Colonic mucosa (tissue), 4 donors: ENCODE measurements at regions of chr17 and their contacts with region 1.

Region 1: DNA sequence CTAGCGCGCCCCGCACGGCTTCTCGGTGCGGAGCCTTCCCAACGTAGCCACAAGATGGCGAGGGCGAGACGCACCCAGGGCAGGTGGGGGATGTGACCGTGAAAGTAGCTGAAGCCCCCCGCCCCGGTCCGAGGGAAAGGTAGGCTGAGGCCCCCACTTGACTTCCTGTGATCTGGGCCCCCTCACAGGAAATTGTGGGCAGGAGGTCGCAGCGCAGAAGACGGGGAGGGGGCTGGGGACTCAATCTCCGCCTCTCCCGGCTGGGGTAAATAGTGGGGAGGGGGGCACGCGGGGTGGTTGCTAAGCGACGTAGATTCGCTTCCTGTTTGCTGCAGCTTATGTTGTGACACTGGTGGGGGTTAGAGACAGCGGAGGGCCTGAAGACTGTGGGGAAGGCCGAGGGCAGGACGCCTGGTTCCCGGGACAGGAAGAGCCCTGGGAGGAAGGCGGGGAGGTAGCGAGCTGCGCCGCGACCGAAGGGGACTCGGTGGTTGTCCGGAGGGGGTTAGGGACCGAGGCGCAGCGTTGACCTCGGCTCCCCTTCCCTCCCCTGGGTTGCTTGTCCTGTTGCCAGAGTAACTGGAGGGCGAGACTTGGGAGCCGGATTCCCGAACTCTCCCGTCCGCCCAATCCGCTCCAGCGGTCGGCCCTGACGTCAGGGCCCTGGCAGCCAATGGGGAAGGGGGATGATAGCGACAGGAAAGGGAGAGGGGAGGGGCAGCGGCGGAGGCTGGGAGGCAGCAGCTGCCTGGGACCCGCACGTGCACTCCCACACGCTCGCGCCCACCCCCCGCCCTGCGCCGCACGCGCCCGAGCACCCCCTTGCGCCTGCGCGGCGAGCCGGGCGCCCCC is 1.2 kb downstream of the KDM6B start:
- DNase-seq: peak; percentile 98
- H3K4me3 ChIP-seq: peak overlapping the region; percentile 77
- H3K27ac ChIP-seq: peak overlapping the region; percentile 100
- H3K4me1 ChIP-seq: peaks cover 28% of the 10 kb centered on the region
- H3K27me3 ChIP-seq: no peaks in the 10 kb centered on the region
- CTCF ChIP-seq: peak; percentile 67

Region 2: GRCh38 chr17:7745748-7746470 is 89.3 kb before region 1 on chr17:
- intact Hi-C with region 1: loop called (anchors 5 kb)
- DNase-seq: no peak
- H3K4me3 ChIP-seq: no peak overlapping the region
- H3K27ac ChIP-seq: no peak overlapping the region
- H3K4me1 ChIP-seq: no peaks in the 10 kb centered on the region
- H3K27me3 ChIP-seq: no peaks in the 10 kb centered on the region
- CTCF ChIP-seq: no peak

Region 3: DNA sequence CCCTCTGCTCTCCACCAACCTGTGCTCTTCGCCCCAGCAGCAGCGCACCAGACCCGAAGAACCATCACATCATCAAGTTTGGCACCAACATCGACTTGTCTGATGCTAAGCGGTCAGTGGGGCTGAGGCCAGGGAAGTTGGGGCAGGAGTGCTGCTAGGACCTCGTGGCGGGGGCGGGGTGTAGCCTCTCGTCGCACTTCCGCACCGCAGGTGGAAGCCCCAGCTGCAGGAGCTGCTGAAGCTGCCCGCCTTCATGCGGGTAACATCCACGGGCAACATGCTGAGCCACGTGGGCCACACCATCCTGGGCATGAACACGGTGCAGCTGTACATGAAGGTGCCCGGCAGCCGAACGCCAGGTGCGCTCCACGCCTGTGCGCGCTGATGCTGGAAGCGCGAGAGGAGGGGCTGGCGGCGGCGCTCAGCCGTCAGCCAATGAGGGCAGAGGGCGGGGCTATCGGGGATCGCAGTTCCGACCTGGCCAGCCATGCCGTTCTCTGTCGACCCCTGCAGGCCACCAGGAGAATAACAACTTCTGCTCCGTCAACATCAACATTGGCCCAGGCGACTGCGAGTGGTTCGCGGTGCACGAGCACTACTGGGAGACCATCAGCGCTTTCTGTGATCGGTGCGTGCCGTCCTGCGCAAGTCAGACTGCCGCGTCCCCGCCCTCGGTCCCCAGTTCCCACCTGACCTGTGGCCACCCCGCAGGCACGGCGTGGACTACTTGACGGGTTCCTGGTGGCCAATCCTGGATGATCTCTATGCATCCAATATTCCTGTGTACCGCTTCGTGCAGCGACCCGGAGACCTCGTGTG is 16.5 kb after region 1 on chr17:
- intact Hi-C with region 1: loop called (anchors 2 kb)
- DNase-seq: peak; percentile 92
- H3K4me3 ChIP-seq: no peak overlapping the region
- H3K27ac ChIP-seq: no peak overlapping the region
- H3K4me1 ChIP-seq: peaks cover 9% of the 10 kb centered on the region
- H3K27me3 ChIP-seq: no peaks in the 10 kb centered on the region
- CTCF ChIP-seq: peak; percentile 94

Region 4: GRCh38 chr17:7894866-7895265 is 59.7 kb after region 1 on chr17:
- intact Hi-C with region 1: loop called (anchors 2 kb)
- DNase-seq: no peak
- H3K4me3 ChIP-seq: no peak overlapping the region
- H3K27ac ChIP-seq: no peak overlapping the region
- H3K4me1 ChIP-seq: peaks cover under 1% of the 10 kb centered on the region
- H3K27me3 ChIP-seq: no peaks in the 10 kb centered on the region
- CTCF ChIP-seq: no peak